Panc1 (cell line): ENCODE measurements at regions of chr13 and their contacts with region 1.

Region 1: GRCh38 chr13:27353166-27353583 is 71.2 kb upstream of the GTF3A start:
- DNase-seq: no peak
- ATAC-seq: peak; percentile 74
- H3K4me3 ChIP-seq: peak overlapping the region; percentile 20 to 54
- H3K27ac ChIP-seq: peak overlapping the region; percentile 80
- H3K4me1 ChIP-seq: peaks cover 33% of the 10 kb centered on the region
- H3K27me3 ChIP-seq: no peaks in the 10 kb centered on the region
- CTCF ChIP-seq: no peak

Region 2: DNA sequence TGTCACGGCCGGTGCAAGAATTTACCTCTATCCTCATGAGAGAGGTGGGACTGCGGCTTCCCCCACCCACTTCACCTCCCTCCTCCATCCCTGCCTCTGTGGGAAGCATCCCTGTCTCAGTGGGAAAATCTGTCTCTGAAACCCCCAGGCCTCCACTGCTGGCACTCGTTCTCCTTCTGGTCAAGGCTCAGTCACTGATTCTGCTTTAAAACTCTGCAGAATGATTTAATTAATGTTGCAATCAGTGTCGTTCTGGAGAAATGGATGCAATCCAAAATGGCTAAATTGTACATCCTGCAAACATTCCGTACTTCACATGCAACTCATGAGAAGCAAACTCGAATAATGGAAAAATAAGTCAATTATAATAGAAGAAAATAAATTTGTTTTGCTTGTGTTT is 77.0 kb before region 1 on chr13:
- CTCF ChIA-PET with region 1: no interaction called
- POLR2A ChIA-PET with region 1: no interaction called
- in situ Hi-C with region 1: no loop called
- intact Hi-C with region 1: loop called (anchors 5 kb)
- DNase-seq: no peak
- ATAC-seq: no peak
- H3K4me3 ChIP-seq: no peak overlapping the region
- H3K27ac ChIP-seq: no peak overlapping the region
- H3K4me1 ChIP-seq: peaks cover 28% of the 10 kb centered on the region
- H3K27me3 ChIP-seq: no peaks in the 10 kb centered on the region
- CTCF ChIP-seq: no peak

Region 3: GRCh38 chr13:27339299-27339698 is 13.9 kb before region 1 on chr13:
- CTCF ChIA-PET with region 1: interaction called, 6 read pairs
- POLR2A ChIA-PET with region 1: interaction called, 10 read pairs
- in situ Hi-C with region 1: no loop called
- intact Hi-C with region 1: no loop called
- DNase-seq: no peak
- ATAC-seq: peak; percentile 88
- H3K4me3 ChIP-seq: no peak overlapping the region
- H3K27ac ChIP-seq: no peak overlapping the region
- H3K4me1 ChIP-seq: peaks cover 9% of the 10 kb centered on the region
- H3K27me3 ChIP-seq: no peaks in the 10 kb centered on the region
- CTCF ChIP-seq: peak; percentile 79